ENCODE measurements at regions of chr11 and their contacts with region 1.

Region 1: GRCh38 chr11:47766305-47767227 is 575 bp downstream of the FNBP4 start:
- DNase-seq: peak; percentile 85

Region 2: DNA sequence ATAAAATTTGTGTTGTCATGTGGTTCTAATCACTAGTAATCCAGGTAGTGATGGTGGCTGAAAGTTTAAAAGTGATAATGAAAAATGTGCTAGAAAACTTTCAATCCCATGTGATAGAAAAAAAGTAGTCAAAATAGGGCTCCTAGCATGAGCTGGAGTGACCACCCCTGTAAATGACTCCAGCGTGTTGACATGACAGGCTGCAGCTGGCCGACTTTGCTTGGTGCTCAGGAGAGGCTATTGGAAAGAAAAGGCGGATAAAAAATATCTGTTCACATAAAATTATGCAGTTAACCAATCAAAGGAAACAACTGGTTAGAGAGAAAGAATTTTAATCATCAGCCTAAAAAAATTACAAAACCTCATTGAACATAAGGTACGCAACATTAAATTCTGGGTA is 107.3 kb before region 1 on chr11:
- intact Hi-C with region 1: no loop called
- DNase-seq: no peak

Region 3: DNA sequence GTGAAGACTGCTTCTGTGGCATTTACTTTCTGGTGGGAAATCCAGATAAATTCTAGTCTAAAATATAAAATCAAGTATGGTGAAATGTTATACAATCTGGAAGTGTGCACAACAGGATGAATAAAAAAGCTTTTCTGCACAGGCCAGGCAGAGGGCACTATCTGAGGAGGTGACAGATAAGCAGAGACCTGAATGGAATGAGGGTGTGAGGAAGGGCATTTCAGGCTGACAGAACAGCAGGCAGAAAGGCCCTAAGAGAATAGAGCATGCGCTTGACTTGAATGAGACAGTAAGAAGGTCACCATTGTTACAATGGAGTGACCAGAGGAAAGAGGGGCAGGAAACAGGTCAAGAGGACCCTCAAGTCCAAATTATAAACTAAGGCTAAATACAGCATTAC is 34.2 kb after region 1 on chr11:
- intact Hi-C with region 1: loop called (anchors 5 kb)
- DNase-seq: no peak

Region 4: GRCh38 chr11:47847892-47848635 is 81.5 kb after region 1 on chr11 and contains the start of gene NUP160:
- intact Hi-C with region 1: loop called (anchors 2 kb)
- DNase-seq: peak; percentile 95
- total RNA-seq, gene NUP160: 12.8 TPM

Measured in cardiac septum (tissue), 1 donor.